ENCODE measurements at regions of chr7 and their contacts with region 1.

Region 1: GRCh38 chr7:26151953-26152781 is at the start of gene NFE2L3:
- H3K4me3 Mint-ChIP-seq: peak within 1 kb of the TSS; percentile 87
- H3K27ac Mint-ChIP-seq: peak within 1 kb of the TSS; percentile 98
- H3K4me1 Mint-ChIP-seq: peaks cover 51% of the 10 kb centered on the region
- H3K27me3 Mint-ChIP-seq: peaks cover 3% of the 10 kb centered on the region

Region 2: DNA sequence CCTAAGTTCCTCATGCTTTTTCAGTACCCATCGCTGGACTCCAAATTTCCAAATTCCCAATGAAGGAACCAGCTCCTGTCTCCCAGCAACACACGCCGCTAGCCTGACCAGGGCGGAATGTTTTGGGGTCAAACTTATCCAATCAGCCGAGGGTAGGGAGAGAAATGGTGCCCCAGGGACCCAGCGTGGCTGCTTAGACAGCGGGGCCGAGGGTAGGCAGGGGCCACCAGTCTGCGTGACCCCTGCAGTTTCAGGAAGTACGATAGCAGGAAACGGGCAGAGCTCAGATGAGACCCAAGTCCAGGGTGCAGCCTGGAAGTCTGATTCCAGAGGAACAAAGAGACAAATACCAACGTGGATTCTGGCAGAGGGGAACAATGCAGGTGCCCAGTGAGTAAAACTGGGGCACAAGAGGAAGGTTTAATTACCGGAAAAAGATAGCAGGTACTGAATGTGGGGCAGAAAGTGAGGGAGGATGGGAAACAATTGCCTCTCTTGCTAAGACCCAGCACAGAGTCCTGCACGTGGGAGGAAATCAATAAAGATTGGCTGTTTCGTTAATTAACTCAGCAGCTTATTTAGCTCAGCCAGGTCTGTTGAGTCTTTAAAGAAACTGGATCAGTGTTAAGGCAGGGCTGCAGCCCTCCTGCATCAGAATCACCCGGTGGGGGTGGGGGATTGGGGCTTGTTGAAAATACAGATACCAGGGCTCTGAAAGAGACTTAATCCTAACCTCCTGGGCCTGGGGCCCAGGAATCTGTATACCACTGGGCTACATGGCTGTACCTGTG is 50.6 kb before region 1 on chr7:
- intact Hi-C with region 1: loop called (anchors 2 kb)
- H3K4me3 Mint-ChIP-seq: peak overlapping the region; percentile 85
- H3K27ac Mint-ChIP-seq: peak overlapping the region; percentile 98
- H3K4me1 Mint-ChIP-seq: peaks cover 65% of the 10 kb centered on the region
- H3K27me3 Mint-ChIP-seq: no peaks in the 10 kb centered on the region

Region 3: GRCh38 chr7:26136831-26137455 is 15.2 kb before region 1 on chr7:
- intact Hi-C with region 1: no loop called
- H3K4me3 Mint-ChIP-seq: no peak overlapping the region
- H3K27ac Mint-ChIP-seq: no peak overlapping the region
- H3K4me1 Mint-ChIP-seq: peaks cover 29% of the 10 kb centered on the region
- H3K27me3 Mint-ChIP-seq: peaks cover 4% of the 10 kb centered on the region

Region 4: GRCh38 chr7:26187380-26188205 is 35.4 kb after region 1 on chr7:
- intact Hi-C with region 1: loop called (anchors 5 kb)
- H3K4me3 Mint-ChIP-seq: no peak overlapping the region
- H3K27ac Mint-ChIP-seq: no peak overlapping the region
- H3K4me1 Mint-ChIP-seq: peaks cover 14% of the 10 kb centered on the region
- H3K27me3 Mint-ChIP-seq: no peaks in the 10 kb centered on the region

Measured in dendritic cell treated with granulocyte-macrophage colony-stimulating factor and Interleukin-4, amounts not matched to agents 40 ng/mL and 50 ng/mL, for 4 days (primary cell).